HEK293T (cell line): ENCODE measurements at regions of chr12 and their contacts with region 1.

Region 1: GRCh38 chr12:53267999-53268647 is at the start of gene ESPL1:
- DNase-seq: peak; percentile 88

Region 2: GRCh38 chr12:53180220-53180930 is 87.7 kb before region 1 on chr12 and contains the starts of genes CSAD and ZNF740:
- CTCF ChIA-PET with region 1: no interaction called
- POLR2A ChIA-PET with region 1: interaction called, 14 read pairs
- DNase-seq: peak; percentile 98

Region 3: DNA sequence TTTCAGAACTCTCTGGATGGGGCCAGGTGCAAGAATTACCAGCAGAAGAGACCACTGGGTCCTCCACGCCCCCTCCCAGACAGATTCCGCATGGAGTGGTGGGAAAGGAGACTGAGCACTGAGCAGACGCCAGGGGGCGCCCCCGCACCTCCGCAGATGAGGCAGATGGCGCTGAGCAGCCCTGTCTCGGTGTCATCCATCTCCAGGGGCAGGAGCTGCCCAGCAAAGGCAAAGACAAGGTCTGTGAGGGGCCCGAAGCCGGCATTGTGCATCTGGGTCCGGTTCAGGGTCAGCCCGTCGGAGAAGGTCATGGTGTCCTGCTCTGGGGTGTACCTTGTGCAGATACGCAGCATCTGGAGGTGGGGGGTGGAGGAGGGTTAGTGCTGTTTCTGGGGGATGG is 54.8 kb before region 1 on chr12:
- CTCF ChIA-PET with region 1: interaction called, 70 read pairs
- POLR2A ChIA-PET with region 1: interaction called, 20 read pairs
- DNase-seq: peak; percentile 88

Region 4: GRCh38 chr12:53220801-53221202 is 47.3 kb before region 1 on chr12:
- CTCF ChIA-PET with region 1: interaction called, 70 read pairs
- POLR2A ChIA-PET with region 1: interaction called, 13 read pairs
- DNase-seq: peak; percentile 87

Region 5: GRCh38 chr12:53251477-53252348 is 16.4 kb before region 1 on chr12:
- CTCF ChIA-PET with region 1: interaction called, 5 read pairs
- POLR2A ChIA-PET with region 1: interaction called, 20 read pairs
- DNase-seq: peak; percentile 91

Region 6: DNA sequence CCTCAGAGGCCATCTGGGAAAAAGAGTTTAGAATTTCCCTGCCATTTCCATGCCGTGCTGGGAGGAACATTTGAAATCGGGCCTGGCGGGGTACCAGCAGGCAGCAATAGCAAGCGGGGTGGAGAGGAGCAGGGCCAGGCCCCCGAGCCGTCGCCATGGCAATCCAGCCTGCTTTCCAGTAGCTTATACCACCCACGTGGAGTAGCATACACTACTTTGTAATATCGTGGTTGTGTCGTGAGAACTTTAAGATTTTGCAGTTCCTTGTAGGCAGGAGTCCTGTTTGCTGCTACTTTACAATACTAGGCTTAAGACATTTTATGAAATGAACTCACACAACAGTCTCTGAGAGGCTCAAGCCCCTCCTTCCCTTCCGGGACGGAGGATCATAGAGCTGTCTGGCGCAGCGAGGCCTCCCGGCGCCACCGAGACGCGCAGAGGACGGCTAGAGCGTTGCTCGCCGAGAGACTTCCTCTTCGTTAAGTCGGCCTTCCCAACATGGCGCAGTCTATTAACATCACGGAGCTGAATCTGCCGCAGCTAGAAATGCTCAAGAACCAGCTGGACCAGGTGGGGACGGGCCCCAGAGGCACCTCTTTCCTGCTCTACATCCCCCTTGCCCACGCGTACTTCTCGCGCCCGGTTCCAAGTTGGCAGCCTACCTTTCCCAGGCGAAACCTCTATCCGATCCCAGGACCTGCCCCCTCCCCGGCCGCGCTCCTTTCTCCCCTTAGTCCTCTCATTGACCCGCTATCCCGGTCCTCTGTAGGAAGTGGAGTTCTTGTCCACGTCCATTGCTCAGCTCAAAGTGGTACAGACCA is 27.2 kb after region 1 on chr12 and contains the start of gene PFDN5:
- CTCF ChIA-PET with region 1: interaction called, 4 read pairs
- POLR2A ChIA-PET with region 1: interaction called, 10 read pairs
- DNase-seq: peak; percentile 89

Region 7: GRCh38 chr12:53336181-53336681 is 68.1 kb after region 1 on chr12 and contains the start of gene SP7:
- CTCF ChIA-PET with region 1: no interaction called
- POLR2A ChIA-PET with region 1: no interaction called
- DNase-seq: no peak